MCF 10A (cell line): ENCODE measurements at regions of chr9 and their contacts with region 1.

Region 1: DNA sequence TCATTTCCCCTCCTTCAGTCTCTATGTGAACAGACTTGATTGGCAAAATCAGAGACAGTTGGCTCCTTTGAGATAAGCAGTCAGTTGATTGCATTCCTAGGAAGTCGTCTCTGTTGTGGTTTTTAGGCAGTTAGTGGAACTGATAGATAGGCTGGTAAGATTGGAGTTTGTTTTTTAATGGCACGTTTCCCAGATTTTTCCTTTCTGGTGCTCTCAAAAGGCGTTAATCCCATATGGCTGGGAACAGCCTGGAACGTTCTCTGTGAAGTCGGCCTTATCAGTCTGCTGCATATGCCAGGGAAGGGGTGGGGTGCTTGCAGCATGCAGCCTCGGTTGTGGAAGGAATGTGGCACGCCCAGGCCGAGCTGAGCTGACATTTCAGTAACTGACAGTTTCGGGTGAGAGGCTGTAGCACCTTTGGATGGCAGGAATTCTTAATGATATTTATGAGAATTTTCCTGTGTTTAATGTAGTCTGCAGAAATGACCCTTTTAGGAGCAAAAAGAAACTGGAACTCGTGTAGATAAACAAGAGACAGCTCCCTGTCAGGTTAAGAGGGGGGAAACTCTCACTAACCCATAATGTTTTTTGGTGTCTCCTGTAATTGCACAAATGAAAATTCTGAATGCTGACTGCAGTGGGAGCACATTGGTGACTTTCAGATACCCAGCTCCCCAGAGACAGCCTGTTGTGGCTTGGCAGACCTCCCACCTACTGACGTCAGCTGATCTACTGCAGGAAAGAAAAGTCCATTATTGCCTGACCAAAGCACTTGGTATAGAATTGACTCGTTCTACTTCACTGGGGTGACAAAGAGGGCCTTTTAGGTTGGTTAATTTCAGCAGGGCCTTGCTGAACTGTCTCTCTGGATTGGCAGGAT is 6.3 kb downstream of the SPTAN1 start:
- DNase-seq: peak; percentile 77
- H3K4me3 Mint-ChIP-seq: peak overlapping the region; percentile 56
- H3K27ac Mint-ChIP-seq: peak overlapping the region; percentile 82
- H3K4me1 Mint-ChIP-seq: peaks cover 28% of the 10 kb centered on the region
- H3K27me3 Mint-ChIP-seq: no peaks in the 10 kb centered on the region
- CTCF ChIP-seq: no peak

Region 2: DNA sequence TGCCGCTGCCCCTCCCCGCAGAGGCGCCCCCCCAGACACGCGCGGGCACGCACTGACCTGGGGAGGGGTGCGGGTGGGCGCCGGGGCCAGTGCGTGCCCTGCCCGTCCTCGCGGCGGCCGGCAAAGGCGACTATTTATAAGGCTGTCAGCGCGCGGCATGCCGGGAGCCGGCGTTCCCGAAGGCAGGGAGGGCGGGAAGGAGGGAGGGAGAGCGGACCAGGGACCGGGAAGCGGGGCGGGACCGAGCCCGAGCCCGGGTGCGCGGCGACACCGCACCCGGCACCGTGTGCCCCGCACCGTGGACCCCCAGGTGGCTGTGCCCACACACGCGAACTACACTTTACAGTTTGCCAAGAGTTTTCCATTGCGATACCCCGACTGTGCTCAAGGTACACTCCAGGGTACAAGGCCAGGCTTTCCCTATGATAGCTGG is 681.1 kb before region 1 on chr9 and contains the start of gene AK1:
- CTCF ChIA-PET with region 1: no interaction called
- POLR2A ChIA-PET with region 1: no interaction called
- intact Hi-C with region 1: no loop called
- DNase-seq: peak; percentile 62
- H3K4me3 Mint-ChIP-seq: peak within 1 kb of the TSS; percentile 80
- H3K27ac Mint-ChIP-seq: peak within 1 kb of the TSS; percentile 57
- H3K4me1 Mint-ChIP-seq: peaks cover 9% of the 10 kb centered on the region
- H3K27me3 Mint-ChIP-seq: no peaks in the 10 kb centered on the region
- CTCF ChIP-seq: no peak
- total RNA-seq, gene AK1: 75.9 and 94.3 TPM in 2 replicates

Region 3: GRCh38 chr9:128448746-128449145 is 109.9 kb before region 1 on chr9:
- CTCF ChIA-PET with region 1: no interaction called
- POLR2A ChIA-PET with region 1: no interaction called
- intact Hi-C with region 1: no loop called
- DNase-seq: no peak
- H3K4me3 Mint-ChIP-seq: no peak overlapping the region
- H3K27ac Mint-ChIP-seq: no peak overlapping the region
- H3K4me1 Mint-ChIP-seq: no peaks in the 10 kb centered on the region
- H3K27me3 Mint-ChIP-seq: no peaks in the 10 kb centered on the region
- CTCF ChIP-seq: no peak

Region 4: DNA sequence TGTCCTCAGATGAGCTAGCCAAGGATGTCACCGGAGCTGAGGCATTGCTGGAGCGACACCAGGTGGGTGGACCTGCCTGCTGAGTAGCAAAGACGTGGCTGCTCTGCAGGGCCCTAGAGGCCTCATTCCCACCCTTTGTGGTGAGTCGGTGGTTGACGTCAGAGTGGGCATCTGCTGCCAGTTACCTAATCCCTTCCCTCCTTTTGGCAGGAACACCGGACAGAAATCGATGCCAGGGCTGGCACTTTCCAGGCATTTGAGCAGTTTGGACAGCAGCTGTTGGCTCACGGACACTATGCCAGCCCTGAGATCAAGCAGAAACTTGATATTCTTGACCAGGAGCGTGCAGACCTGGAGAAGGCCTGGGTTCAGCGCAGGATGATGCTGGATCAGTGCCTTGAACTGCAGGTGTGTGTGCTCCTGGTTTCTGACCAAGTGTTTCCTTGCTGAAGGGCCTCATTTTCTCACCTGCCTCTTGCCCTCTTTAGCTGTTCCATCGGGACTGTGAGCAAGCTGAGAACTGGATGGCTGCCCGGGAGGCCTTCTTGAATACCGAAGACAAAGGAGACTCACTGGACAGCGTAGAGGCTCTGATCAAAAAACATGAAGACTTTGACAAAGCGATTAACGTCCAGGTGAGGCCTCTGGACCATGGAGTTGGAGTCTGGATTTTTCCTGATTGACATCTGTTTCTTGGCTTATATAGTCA is 49.1 kb after region 1 on chr9:
- CTCF ChIA-PET with region 1: interaction called, 6 read pairs
- POLR2A ChIA-PET with region 1: interaction called, 44 read pairs
- intact Hi-C with region 1: loop called (anchors 5 kb)
- DNase-seq: peak; percentile 99
- H3K4me3 Mint-ChIP-seq: no peak overlapping the region
- H3K27ac Mint-ChIP-seq: peak overlapping the region; percentile 87
- H3K4me1 Mint-ChIP-seq: peaks cover 22% of the 10 kb centered on the region
- H3K27me3 Mint-ChIP-seq: no peaks in the 10 kb centered on the region
- CTCF ChIP-seq: no peak